ENCODE measurements at regions of chr2 and their contacts with region 1.

Region 1: GRCh38 chr2:186503848-186504606 is 18.0 kb downstream of the ZC3H15 start:
- DNase-seq: no peak
- ATAC-seq: peak in 1 of 2 donors; percentile 36

Region 2: GRCh38 chr2:186477790-186478189 is 26.2 kb before region 1 on chr2:
- intact Hi-C with region 1: no loop called
- DNase-seq: no peak
- ATAC-seq: no peak

Region 3: GRCh38 chr2:186641807-186642321 is 137.8 kb after region 1 on chr2:
- intact Hi-C with region 1: loop called (anchors 1 to 5 kb)
- DNase-seq: no peak
- ATAC-seq: peak; percentile 89 to 91

Measured in left cardiac atrium (tissue), 4 donors.